ENCODE measurements at regions of chr6 and their contacts with region 1.

Region 1: GRCh38 chr6:169831450-169832246 is 80.2 kb downstream of the ERMARD start:
- DNase-seq: peak; percentile 54 to 74 (median 65)
- H3K4me3 ChIP-seq: no peak overlapping the region
- H3K27ac ChIP-seq: no peak overlapping the region
- H3K4me1 ChIP-seq: peaks cover 0 to 6% (median 4%) of the 10 kb centered on the region in 4 experiments
- H3K27me3 ChIP-seq: peaks cover 2 to 26% (median 7%) of the 10 kb centered on the region in 5 experiments

Region 2: GRCh38 chr6:169800668-169801395 is 30.8 kb before region 1 on chr6:
- CTCF ChIA-PET with region 1: interaction called, 23 read pairs
- POLR2A ChIA-PET with region 1: no interaction called
- DNase-seq: peak in 1 of 3 donors; percentile 8
- H3K4me3 ChIP-seq: no peak overlapping the region
- H3K27ac ChIP-seq: no peak overlapping the region
- H3K4me1 ChIP-seq: peaks cover 0 to 9% (median 6%) of the 10 kb centered on the region in 4 experiments
- H3K27me3 ChIP-seq: peaks cover 6 to 30% (median 16%) of the 10 kb centered on the region in 5 experiments

Region 3: DNA sequence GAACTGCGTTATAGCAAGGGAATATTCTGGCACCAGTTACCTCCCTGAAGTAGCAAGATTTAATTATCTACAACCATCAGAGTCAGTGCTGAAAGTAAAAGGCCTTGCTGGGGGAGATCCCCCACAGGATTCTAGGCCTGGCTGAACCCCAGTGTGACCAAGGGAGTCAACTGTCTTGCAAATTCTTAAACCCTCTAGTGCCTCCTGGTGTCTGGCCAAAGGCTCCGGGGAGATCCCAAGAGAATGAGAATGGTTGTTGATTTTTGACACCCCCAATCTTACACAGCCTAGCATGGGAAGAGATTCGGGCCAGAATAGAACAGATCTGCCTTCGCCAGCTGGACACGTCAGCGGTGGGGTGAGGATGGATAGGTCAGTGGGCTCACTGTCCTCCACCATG is 99.2 kb after region 1 on chr6:
- CTCF ChIA-PET with region 1: interaction called, 13 read pairs
- POLR2A ChIA-PET with region 1: no interaction called
- DNase-seq: peak; percentile 40 to 75 (median 44)
- H3K4me3 ChIP-seq: no peak overlapping the region
- H3K27ac ChIP-seq: no peak overlapping the region
- H3K4me1 ChIP-seq: no peaks in the 10 kb centered on the region
- H3K27me3 ChIP-seq: peaks cover 0 to 9% (median 1%) of the 10 kb centered on the region in 5 experiments

Region 4: DNA sequence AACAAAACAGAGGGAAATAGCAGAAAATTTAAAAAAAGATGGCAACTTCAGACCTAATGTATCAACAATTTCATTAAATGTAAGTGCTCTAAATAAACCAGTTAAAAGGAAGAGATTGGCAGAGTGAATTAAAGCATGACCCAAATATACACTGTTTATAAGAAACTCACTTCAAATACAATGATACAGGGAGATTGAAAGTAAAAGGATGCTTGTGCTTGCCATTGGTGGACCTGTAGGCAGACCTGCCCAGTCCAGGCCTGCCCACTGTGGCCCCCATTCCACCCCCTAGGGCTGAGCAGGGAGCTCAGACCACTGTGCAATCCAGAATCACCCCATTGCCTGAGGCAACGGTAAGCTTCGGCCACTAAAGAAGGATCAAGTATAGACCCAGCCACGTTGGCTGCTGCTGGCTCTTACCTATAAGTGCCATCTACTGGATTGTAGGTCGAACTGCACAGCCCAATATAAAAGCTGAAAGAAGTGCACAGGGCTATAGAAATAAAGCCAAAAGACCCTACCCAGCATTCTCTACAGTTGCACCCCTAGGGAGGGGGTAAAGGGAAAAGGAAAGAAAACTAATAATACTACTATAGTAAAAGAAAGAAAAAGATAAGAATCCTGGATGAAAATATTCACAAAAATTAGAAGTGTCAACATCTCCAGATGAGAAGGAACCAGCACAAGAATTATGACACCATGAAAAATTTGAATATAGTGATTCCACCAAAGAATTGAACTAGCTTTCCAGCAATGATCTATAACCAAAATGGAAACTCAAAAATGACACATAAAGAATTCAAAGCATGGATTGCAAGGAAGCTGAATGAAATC is 685.4 kb after region 1 on chr6:
- CTCF ChIA-PET with region 1: interaction called, 11 read pairs
- POLR2A ChIA-PET with region 1: no interaction called
- DNase-seq: peak; percentile 45 to 77 (median 72)
- H3K4me3 ChIP-seq: peak overlapping the region in 2 of 7 experiments; percentile 31 to 55
- H3K27ac ChIP-seq: no peak overlapping the region
- H3K4me1 ChIP-seq: peaks cover 0 to 2% (median 0%) of the 10 kb centered on the region in 4 experiments
- H3K27me3 ChIP-seq: no peaks in the 10 kb centered on the region

Region 5: DNA sequence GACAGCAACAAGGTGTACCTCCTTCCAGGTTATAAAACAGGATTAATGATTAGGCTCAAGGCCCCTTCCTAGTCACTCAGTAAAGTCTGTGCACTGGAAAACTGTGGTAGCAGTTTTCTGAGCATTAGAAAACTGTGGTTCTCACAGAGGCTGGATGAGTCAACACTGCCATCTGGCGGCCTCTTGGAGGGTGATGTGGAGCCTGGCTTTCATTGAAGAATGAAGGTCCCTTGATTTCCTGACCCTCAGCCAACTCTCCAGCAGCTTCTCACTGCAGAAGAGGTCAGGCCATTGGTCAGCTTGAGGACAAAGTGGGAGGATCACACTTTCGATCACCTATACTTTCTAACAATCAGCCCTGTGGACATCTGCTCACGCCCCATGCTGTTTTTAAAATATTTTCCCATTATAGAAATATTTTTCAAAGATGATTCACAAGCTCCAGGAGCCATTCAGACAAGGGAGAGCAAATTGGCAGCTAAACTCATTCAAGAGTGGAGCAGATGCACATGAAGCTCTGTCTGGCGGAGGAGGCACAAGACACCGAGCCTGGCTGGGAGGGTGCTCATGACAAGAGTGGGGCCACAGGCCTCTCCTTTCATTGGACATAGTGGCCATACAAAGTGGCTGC is 698.3 kb after region 1 on chr6:
- CTCF ChIA-PET with region 1: interaction called, 14 read pairs
- POLR2A ChIA-PET with region 1: no interaction called
- DNase-seq: peak; percentile 57 to 76 (median 65)
- H3K4me3 ChIP-seq: no peak overlapping the region
- H3K27ac ChIP-seq: no peak overlapping the region
- H3K4me1 ChIP-seq: no peaks in the 10 kb centered on the region
- H3K27me3 ChIP-seq: no peaks in the 10 kb centered on the region

Measured in common myeloid progenitor, CD34-positive (primary cell).